ENCODE measurements at regions of chr13 and their contacts with region 1.

Region 1: GRCh38 chr13:46492946-46493345 is 60.0 kb upstream of the LRCH1 start:
- DNase-seq: no peak
- ATAC-seq: no peak
- H3K4me3 ChIP-seq: no peak overlapping the region
- H3K27ac ChIP-seq: no peak overlapping the region
- H3K4me1 ChIP-seq: peaks cover 4 to 8% of the 10 kb centered on the region in 2 donors
- H3K27me3 ChIP-seq: no peaks in the 10 kb centered on the region

Region 2: DNA sequence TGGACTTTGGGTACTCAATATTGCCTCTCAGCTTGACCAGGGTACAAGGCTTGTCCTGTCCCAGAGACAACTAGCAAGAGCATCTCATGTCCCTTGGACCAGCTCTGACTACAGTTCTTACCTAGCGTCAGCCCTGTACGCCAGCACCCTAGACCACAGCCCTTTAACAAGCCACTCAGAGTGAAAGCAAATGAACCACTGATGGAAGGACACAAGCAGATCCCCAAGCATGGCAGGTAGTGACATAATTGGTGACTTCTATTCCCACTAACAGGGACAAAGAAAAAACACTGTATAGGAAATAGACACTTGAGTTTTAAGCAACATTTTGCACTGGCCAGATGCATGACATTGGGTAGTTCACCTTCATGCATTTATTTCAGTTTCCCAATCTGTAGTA is 51.3 kb after region 1 on chr13:
- intact Hi-C with region 1: loop called in 1 of 2 experiments (anchors 10 kb)
- DNase-seq: no peak
- ATAC-seq: peak; percentile 26
- H3K4me3 ChIP-seq: no peak overlapping the region
- H3K27ac ChIP-seq: no peak overlapping the region
- H3K4me1 ChIP-seq: no peaks in the 10 kb centered on the region
- H3K27me3 ChIP-seq: no peaks in the 10 kb centered on the region

Region 3: GRCh38 chr13:46721054-46721453 is 228.1 kb after region 1 on chr13:
- intact Hi-C with region 1: loop called (anchors 2 kb)
- DNase-seq: peak in 1 of 2 donors; percentile 52
- ATAC-seq: peak; percentile 85
- H3K4me3 ChIP-seq: no peak overlapping the region
- H3K27ac ChIP-seq: no peak overlapping the region
- H3K4me1 ChIP-seq: no peaks in the 10 kb centered on the region
- H3K27me3 ChIP-seq: no peaks in the 10 kb centered on the region